ENCODE measurements at regions of chr20 and their contacts with region 1.

Region 1: GRCh38 chr20:20699144-20699543 is 13.3 kb downstream of the RALGAPA2 start:
- DNase-seq: peak; percentile 82
- ATAC-seq: peak; percentile 98
- H3K4me3 ChIP-seq: no peak overlapping the region
- H3K27ac ChIP-seq: no peak overlapping the region
- H3K4me1 ChIP-seq: peaks cover 12% of the 10 kb centered on the region
- H3K27me3 ChIP-seq: no peaks in the 10 kb centered on the region
- CTCF ChIP-seq: no peak

Region 2: DNA sequence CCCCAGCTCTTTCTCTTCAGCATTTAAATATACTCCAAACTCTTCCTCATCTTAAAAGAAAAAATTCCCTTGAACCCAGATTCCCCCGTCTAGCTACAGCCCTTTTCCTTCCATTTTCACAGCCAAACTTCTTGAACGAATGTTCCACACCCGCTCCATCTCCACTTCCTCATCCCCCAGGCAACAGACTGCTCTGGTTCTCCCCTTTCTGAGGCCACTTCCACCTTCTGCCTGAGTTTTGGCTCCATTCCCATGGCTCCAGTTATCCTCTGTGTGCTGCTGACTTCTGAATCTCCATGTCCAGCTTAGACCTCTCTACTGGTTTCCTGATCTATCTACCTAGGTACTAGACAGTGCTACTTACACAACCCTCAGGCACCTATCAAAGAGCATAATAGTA is 93.1 kb before region 1 on chr20:
- CTCF ChIA-PET with region 1: no interaction called
- POLR2A ChIA-PET with region 1: no interaction called
- intact Hi-C with region 1: no loop called
- DNase-seq: no peak
- ATAC-seq: no peak
- H3K4me3 ChIP-seq: no peak overlapping the region
- H3K27ac ChIP-seq: no peak overlapping the region
- H3K4me1 ChIP-seq: no peaks in the 10 kb centered on the region
- H3K27me3 ChIP-seq: no peaks in the 10 kb centered on the region
- CTCF ChIP-seq: no peak

Region 3: GRCh38 chr20:20712474-20713243 is 13.5 kb after region 1 on chr20 and contains the start of gene RALGAPA2:
- CTCF ChIA-PET with region 1: no interaction called
- POLR2A ChIA-PET with region 1: interaction called, 7 read pairs
- intact Hi-C with region 1: loop called (anchors 2 kb)
- DNase-seq: peak; percentile 97
- ATAC-seq: peak; percentile 96
- H3K4me3 ChIP-seq: peak within 1 kb of the TSS; percentile 88
- H3K27ac ChIP-seq: peak within 1 kb of the TSS; percentile 36; the same call in 1 of the 2 replicates
- H3K4me1 ChIP-seq: peaks cover 18% of the 10 kb centered on the region
- H3K27me3 ChIP-seq: no peaks in the 10 kb centered on the region
- CTCF ChIP-seq: no peak
- total RNA-seq, gene RALGAPA2: 9.8 and 10.5 TPM in 2 replicates

Region 4: DNA sequence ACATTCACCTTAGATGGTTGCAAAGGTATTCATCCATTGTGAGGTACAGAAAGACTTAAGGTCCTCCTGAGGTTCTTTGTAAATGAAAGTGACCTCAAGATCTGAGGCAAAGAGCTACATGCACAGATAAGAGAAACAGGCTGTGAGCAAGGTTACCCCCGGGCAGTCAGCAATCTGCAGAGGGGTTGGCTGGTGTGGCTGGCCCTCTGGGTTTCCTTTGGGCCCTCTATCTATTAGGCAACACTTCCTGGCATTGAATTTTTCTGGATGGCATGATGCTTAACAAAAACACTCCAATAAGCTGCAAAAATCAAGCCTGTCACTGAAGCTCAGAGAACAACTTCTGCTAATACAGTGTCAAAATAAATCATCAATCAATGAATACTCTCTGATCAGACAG is 62.2 kb after region 1 on chr20:
- CTCF ChIA-PET with region 1: no interaction called
- POLR2A ChIA-PET with region 1: no interaction called
- intact Hi-C with region 1: no loop called
- DNase-seq: no peak
- ATAC-seq: no peak
- H3K4me3 ChIP-seq: no peak overlapping the region
- H3K27ac ChIP-seq: no peak overlapping the region
- H3K4me1 ChIP-seq: no peaks in the 10 kb centered on the region
- H3K27me3 ChIP-seq: peaks cover 96% of the 10 kb centered on the region
- CTCF ChIP-seq: no peak